Mammary epithelial cell (primary cell): ENCODE measurements at regions of chr15 and their contacts with region 1.

Region 1: DNA sequence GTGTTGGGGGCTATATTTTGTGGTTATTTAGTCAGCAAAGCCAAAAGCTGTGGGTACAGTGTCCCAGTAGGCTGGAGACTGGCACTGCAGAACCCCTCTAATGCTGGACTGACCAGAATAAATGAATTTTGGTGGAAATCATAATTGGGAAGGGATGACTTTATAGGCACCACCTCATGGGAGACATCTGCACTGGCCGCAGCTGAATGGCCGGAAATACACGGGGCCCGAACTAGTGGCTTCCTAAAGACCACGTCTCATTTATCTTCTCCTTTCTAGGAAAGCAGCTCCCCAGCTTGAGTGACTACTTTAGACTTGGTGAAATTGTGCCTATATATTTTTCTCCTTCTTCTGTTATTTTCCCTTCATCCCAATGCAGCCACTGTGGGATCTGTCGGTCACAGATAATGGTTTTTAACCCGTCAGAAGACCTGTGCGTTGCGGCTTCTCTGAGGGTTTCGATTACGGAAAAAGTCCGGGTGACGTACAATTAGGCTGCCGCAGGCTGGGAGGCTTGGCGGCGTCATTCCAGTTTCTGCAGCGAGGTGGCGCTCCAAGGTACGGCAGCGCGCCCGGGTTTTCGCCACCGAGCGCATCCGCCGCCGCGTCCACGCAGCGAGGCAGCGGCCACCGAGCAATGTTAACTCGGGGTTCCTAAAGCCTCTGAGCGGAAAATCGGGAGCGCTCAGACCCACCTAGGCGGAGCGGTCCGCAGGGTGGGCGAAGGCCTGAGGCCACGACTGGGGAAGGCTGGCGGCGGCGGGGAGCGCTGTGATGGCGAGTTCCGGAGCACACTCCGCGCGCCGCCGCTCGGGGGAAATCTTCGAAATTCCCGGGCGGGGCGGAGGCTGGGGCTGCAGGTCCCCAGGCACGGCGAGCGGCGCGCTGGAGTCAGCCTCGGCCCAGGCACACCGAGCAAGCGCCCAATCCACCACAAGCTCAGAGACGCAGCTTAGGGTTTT is 26.3 kb downstream of the NR2F2 start:
- DNase-seq: peak; percentile 86
- H3K4me3 ChIP-seq: peak overlapping the region; percentile 61 to 78 (median 73)
- H3K27ac ChIP-seq: peak overlapping the region; percentile 66
- H3K4me1 ChIP-seq: peaks cover 23% of the 10 kb centered on the region
- H3K27me3 ChIP-seq: peaks cover 21% of the 10 kb centered on the region
- CTCF ChIP-seq: peak; percentile 66 to 89

Region 2: DNA sequence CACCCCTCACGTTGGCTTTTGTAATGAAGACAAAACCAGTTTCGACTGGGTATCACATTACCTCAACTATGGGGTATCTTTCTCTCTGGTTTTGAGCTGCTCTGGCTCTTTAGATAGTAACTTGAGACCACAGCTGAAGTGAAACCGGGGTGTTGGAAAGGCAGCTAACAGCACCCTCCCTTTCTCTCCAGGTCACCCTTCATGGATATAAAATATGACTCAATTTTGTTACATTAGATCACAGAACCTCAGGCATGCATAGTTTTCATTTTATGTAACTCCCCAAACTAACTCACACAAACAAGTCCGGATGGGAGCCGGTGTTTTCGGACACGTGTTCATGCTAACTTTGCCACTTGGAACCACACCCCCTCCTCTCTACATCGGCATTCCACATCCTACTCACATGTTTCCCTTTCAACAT is 64.4 kb after region 1 on chr15:
- CTCF ChIA-PET with region 1: no interaction called
- dilution Hi-C with region 1: no loop called
- in situ Hi-C with region 1: no loop called
- intact Hi-C with region 1: loop called (anchors 5 kb)
- DNase-seq: peak; percentile 34
- H3K4me3 ChIP-seq: no peak overlapping the region
- H3K27ac ChIP-seq: no peak overlapping the region
- H3K4me1 ChIP-seq: peaks cover 10% of the 10 kb centered on the region
- H3K27me3 ChIP-seq: peaks cover 33% of the 10 kb centered on the region
- CTCF ChIP-seq: no peak

Region 3: DNA sequence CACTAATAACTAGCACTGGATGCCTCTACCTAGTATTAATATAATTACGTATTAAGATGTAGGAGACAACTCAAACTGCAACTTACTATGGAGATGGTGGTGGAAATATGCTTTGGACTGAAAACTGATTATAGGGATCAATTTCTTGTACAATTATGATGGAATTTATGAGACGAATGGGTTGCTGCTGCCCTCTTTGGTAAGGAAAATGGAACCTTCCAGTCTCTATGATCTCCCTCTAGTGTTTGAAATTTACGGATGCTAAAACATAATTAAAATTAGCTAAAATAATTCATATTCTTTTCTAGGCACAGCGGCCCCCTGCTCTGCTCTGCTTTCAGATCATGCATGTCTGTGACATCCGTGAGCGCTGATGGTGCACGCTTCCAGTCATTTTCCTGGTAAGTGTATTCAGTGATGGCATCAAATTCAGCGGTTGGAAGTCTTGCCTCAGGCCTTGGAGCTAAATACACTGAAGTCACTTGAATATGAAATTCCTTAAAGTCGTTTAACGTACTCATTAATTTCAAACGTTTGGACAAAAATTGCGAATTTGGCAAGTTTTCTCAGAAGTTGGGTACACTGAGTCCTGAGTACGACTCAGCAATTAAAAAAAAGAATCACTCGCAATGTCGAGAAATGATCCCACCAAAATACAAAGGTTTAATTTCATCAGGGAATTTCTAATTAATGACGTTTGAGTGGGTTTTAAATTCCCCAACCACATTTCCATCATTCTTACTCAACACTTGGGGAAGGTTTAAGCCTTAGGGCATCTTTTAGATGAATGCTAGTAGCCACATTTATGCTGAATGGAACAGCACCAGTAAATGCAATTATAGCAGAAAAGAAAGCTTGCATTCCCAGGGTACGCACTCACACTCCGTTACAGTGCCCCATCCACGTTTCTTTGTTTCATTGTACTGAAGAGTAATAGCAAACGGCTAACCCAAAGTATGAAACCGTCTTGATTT is 106.3 kb after region 1 on chr15:
- CTCF ChIA-PET with region 1: interaction called, 5 read pairs
- dilution Hi-C with region 1: no loop called
- in situ Hi-C with region 1: no loop called
- intact Hi-C with region 1: loop called (anchors 2 kb)
- DNase-seq: no peak
- H3K4me3 ChIP-seq: no peak overlapping the region
- H3K27ac ChIP-seq: no peak overlapping the region
- H3K4me1 ChIP-seq: no peaks in the 10 kb centered on the region
- H3K27me3 ChIP-seq: no peaks in the 10 kb centered on the region
- CTCF ChIP-seq: peak in 1 of 2 donors; percentile 14

Region 4: DNA sequence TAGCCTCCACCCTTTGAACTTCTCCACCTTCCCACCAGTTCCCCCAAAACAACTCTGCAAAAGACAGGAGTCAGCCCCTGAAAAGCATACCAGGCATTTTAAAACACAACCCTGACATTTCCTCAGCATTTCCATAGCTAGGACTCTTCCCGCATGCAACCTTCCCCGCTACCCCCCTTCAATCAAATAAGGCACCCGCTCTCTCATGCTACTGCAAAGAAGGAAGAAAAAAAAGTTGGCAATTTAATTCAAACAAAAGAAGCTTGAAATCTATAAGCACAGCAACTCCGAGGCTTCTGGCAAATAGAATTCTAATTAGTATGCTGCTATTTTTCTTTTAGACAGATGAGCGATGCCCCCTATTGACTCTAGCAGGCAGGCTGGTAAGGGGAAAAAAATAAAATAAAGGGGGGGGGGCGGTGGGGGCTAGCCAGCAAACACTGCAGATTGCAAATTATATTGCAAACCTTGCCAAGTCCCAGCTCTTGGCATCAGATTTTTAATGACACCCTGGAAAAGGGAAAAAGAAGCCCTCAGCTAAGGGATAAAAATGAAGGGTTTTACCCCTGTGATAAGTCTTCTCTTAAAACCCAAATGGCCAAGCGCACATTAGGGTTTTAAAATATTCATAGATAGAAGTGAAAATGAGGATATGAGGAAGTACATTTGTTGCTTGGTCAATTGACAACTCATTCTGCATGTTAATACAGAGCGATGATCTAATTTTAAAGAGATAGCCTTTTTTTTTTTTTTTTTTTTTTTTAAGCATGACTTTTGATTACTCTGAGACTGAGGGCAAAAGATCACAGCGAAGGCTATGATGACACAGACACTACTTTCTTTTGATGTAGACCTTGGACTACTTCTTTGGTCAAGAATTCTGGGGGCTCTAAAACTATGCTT is 229.0 kb after region 1 on chr15:
- CTCF ChIA-PET with region 1: no interaction called
- dilution Hi-C with region 1: no loop called
- in situ Hi-C with region 1: no loop called
- intact Hi-C with region 1: loop called (anchors 1 kb)
- DNase-seq: no peak
- H3K4me3 ChIP-seq: no peak overlapping the region
- H3K27ac ChIP-seq: no peak overlapping the region
- H3K4me1 ChIP-seq: no peaks in the 10 kb centered on the region
- H3K27me3 ChIP-seq: peaks cover 4% of the 10 kb centered on the region
- CTCF ChIP-seq: peak; percentile 12 to 39

Region 5: DNA sequence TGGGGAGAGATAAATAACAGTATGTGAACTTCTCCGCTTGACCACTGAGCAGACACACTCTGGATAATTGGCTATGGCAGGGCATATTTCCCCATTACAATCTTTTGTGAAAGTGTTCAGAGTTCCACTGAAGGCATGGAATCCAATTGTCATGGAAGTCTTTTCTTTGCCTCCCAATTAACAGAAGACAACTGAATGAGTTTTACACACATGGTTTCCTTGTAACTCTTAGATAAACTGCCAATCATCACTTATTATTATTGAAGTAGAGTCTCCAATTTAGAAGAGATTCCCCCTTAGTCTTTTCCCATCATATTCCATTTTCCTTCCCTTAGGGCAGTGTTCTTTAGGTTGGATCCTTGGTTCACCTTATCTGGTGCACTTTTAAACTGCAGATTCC is 282.0 kb after region 1 on chr15:
- CTCF ChIA-PET with region 1: no interaction called
- dilution Hi-C with region 1: no loop called
- in situ Hi-C with region 1: no loop called
- intact Hi-C with region 1: no loop called
- DNase-seq: no peak
- H3K4me3 ChIP-seq: no peak overlapping the region
- H3K27ac ChIP-seq: no peak overlapping the region
- H3K4me1 ChIP-seq: no peaks in the 10 kb centered on the region
- H3K27me3 ChIP-seq: no peaks in the 10 kb centered on the region
- CTCF ChIP-seq: no peak

Region 6: DNA sequence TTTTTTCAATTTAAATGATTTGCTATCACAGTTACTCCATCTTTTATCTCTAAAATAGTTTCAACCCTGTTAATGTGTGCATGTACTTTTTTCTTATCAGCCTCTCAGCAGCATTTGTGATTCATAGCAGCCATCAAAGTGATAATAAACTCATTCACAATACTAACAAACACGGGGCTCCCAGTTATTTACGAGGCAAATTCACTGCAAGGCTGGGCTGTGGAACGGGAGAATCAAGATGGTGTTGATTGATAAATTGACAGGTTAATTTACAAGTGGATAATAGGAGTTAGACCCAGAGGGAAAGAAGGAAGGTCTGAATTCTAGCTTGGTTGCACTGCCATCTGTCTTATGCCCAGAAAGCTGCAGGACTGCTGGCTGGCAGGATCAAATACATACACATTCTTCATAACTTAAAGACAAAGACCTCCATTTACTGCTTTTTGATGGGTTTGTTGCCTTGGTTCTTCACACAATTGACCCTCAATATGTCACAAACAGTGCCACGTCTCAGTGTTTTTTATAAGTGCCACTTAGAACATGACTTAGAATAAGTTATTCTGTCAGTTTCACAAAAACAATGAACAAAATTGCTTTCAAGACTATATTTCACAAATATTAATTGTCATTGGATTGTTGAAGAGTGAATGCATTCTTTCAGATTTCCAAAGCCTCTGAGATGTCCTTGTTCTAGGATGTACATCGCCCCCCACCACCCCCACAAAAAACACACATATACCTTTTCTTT is 536.6 kb after region 1 on chr15:
- CTCF ChIA-PET with region 1: no interaction called
- dilution Hi-C with region 1: no loop called
- in situ Hi-C with region 1: no loop called
- intact Hi-C with region 1: loop called (anchors 1 kb)
- DNase-seq: peak; percentile 21
- H3K4me3 ChIP-seq: no peak overlapping the region
- H3K27ac ChIP-seq: no peak overlapping the region
- H3K4me1 ChIP-seq: no peaks in the 10 kb centered on the region
- H3K27me3 ChIP-seq: no peaks in the 10 kb centered on the region
- CTCF ChIP-seq: peak in 1 of 2 donors; percentile 51

Region 7: DNA sequence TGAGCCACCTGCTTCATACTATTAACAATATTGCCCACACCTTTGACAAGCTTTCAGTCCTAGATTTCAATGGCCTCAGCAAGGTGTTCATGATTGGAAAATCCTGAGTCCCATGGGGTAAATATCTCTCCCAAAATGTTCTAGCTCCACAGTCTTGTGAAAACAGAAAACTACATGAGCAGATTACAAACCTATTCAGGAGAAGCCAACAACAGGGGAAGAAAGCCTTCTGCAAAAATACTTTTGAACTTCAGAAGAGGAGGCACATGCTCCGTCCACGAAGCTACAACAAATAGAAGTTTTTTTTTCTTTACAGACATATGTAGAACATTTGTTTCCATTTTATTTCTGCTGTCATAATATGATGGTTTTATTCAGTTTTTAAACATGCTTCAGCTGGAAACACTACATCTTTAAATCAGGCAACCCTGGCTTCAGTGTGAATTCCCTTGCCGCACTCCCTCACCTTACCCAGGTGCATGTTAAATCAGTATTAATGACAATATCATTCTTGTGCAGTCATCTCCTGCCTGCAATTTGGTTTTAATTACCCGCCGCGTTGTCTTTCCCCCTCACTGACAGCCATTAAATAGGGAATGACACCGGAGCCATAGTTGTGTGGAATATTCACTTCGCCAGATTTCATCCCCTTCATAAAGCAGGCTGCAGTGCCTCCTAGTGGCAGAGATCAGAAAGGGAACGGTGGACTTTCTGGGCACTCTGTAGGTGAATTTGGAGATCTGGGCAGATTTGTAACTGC is 878.3 kb after region 1 on chr15:
- CTCF ChIA-PET with region 1: no interaction called
- dilution Hi-C with region 1: no loop called
- in situ Hi-C with region 1: loop called in 1 of 2 experiments (anchors 25 kb)
- intact Hi-C with region 1: loop called (anchors 2 kb)
- DNase-seq: peak; percentile 35
- H3K4me3 ChIP-seq: no peak overlapping the region
- H3K27ac ChIP-seq: no peak overlapping the region
- H3K4me1 ChIP-seq: no peaks in the 10 kb centered on the region
- H3K27me3 ChIP-seq: no peaks in the 10 kb centered on the region
- CTCF ChIP-seq: peak; percentile 87 to 88

Region 8: DNA sequence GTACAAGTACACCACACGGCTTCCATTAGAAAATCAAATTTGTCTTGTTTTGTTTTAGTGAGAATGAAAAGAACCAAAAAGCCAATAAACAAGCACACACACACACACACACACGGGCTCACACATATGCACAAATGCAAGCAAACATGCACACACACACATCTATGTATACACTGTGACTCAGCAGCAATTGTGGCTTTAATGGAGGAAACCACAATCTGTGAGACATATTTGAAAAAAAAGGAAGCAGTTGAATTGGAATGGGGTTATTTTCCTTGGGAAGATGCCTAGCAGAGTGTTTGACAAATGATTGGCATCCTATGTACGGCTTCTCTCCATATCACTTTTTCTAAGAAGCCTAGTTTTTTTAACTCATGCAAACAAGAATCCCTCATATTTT is 1402.6 kb after region 1 on chr15:
- CTCF ChIA-PET with region 1: interaction called, 25 read pairs
- dilution Hi-C with region 1: no loop called
- in situ Hi-C with region 1: no loop called
- intact Hi-C with region 1: loop called (anchors 1 kb)
- DNase-seq: peak; percentile 83
- H3K4me3 ChIP-seq: no peak overlapping the region
- H3K27ac ChIP-seq: no peak overlapping the region
- H3K4me1 ChIP-seq: peaks cover 3% of the 10 kb centered on the region
- H3K27me3 ChIP-seq: no peaks in the 10 kb centered on the region
- CTCF ChIP-seq: no peak